OCI-LY7 (cell line): ENCODE measurements at regions of chrX and their contacts with region 1.

Region 1: DNA sequence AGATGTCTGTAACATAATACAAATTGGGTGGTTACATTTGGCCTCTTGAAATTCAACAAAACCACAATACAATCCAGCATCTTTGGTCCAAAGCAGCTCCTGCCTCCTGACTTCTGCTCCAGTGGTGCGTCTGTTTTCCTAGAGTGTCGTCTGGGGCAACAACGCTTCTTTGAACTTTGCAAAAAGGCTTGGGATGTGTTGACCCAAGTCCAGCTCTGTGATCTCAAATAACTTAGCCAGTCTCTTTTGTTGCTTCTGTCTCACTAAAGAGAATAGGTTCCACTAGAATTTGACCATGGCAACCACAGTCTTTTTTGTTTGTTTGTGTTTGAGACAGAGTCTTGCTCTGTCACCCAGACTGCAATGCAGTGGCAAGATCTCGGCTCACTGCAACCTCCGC is 324.0 kb downstream of the DHRSX start:
- DNase-seq: no peak
- H3K4me3 ChIP-seq: no peak overlapping the region
- H3K27ac ChIP-seq: no peak overlapping the region
- H3K4me1 ChIP-seq: peaks cover 47% of the 10 kb centered on the region
- CTCF ChIP-seq: no peak

Region 2: GRCh38 chrX:2188330-2188792 is 11.6 kb after region 1 on chrX:
- CTCF ChIA-PET with region 1: no interaction called
- POLR2A ChIA-PET with region 1: no interaction called
- intact Hi-C with region 1: no loop called
- DNase-seq: no peak
- H3K4me3 ChIP-seq: no peak overlapping the region
- H3K27ac ChIP-seq: no peak overlapping the region
- H3K4me1 ChIP-seq: no peaks in the 10 kb centered on the region
- CTCF ChIP-seq: no peak

Region 3: GRCh38 chrX:2589186-2590030 is 412.7 kb after region 1 on chrX:
- CTCF ChIA-PET with region 1: no interaction called
- POLR2A ChIA-PET with region 1: no interaction called
- intact Hi-C with region 1: loop called (anchors 5 kb)
- DNase-seq: no peak
- H3K4me3 ChIP-seq: no peak overlapping the region
- H3K27ac ChIP-seq: no peak overlapping the region
- H3K4me1 ChIP-seq: peaks cover 24% of the 10 kb centered on the region
- CTCF ChIP-seq: no peak